ENCODE measurements at regions of chr6 and their contacts with region 1.

Region 1: DNA sequence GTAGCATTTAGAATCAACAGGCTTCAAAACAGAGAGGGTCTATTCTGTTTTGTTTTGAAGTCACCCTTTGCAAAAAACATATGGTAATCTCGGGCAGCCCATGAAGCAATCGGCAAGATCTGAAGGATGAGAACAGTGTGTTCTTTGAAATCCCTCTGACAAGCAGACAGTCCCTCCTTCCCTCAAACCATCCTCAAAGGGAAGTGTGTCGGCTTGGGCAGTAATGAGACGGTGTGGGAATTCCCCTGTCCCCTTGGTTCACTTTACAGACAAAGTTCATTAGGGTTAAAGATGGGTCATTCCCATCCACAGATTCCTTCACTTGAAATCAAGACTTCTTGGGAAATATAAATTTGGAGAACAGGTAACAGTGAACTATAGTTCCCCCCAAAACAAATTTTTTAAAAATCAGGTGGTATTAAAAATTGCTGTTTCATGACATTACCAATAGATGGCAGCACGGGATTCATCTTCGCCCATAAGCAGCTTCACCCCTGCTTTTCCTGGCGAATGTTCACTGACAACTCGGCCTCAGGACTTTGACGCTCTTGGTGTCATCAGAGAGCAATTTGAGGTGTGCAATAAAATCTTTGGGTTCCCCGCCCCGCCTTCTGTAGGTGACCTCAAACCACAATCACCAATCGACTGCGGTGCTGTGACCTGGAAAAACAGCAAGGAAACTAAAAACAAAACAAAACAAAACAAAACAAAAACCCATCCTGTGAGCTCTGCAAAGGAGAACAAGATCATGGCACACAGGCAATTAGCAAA is 159.3 kb upstream of the TNFAIP3 start:
- DNase-seq: peak in 1 of 2 donors; percentile 68
- ATAC-seq: peak; percentile 75
- H3K4me3 ChIP-seq: no peak overlapping the region
- H3K27ac ChIP-seq: no peak overlapping the region
- H3K4me1 ChIP-seq: no peaks in the 10 kb centered on the region
- H3K27me3 ChIP-seq: no peaks in the 10 kb centered on the region

Region 2: GRCh38 chr6:137866914-137867684 is 159.3 kb after region 1 on chr6 and contains the start of gene TNFAIP3:
- intact Hi-C with region 1: loop called (anchors 5 kb)
- DNase-seq: peak; percentile 95 to 98
- ATAC-seq: peak; percentile 94
- H3K4me3 ChIP-seq: peak within 1 kb of the TSS; percentile 75 to 78
- H3K27ac ChIP-seq: peak within 1 kb of the TSS; percentile 40 to 77
- H3K4me1 ChIP-seq: no peaks in the 10 kb centered on the region
- H3K27me3 ChIP-seq: no peaks in the 10 kb centered on the region
- total RNA-seq, gene TNFAIP3: 22.0 to 40.2 TPM

Region 3: GRCh38 chr6:137944793-137945498 is 237.2 kb after region 1 on chr6:
- intact Hi-C with region 1: loop called (anchors 2 kb)
- DNase-seq: no peak
- ATAC-seq: peak; percentile 69
- H3K4me3 ChIP-seq: no peak overlapping the region
- H3K27ac ChIP-seq: no peak overlapping the region
- H3K4me1 ChIP-seq: no peaks in the 10 kb centered on the region
- H3K27me3 ChIP-seq: no peaks in the 10 kb centered on the region

Region 4: GRCh38 chr6:137975188-137975940 is 267.6 kb after region 1 on chr6:
- intact Hi-C with region 1: loop called (anchors 10 kb)
- DNase-seq: no peak
- ATAC-seq: no peak
- H3K4me3 ChIP-seq: no peak overlapping the region
- H3K27ac ChIP-seq: no peak overlapping the region
- H3K4me1 ChIP-seq: no peaks in the 10 kb centered on the region
- H3K27me3 ChIP-seq: no peaks in the 10 kb centered on the region

Region 5: GRCh38 chr6:138031850-138032249 is 324.1 kb after region 1 on chr6:
- intact Hi-C with region 1: no loop called
- DNase-seq: no peak
- ATAC-seq: no peak
- H3K4me3 ChIP-seq: no peak overlapping the region
- H3K27ac ChIP-seq: no peak overlapping the region
- H3K4me1 ChIP-seq: no peaks in the 10 kb centered on the region
- H3K27me3 ChIP-seq: peaks cover 0 to 1% of the 10 kb centered on the region in 2 donors

Region 6: DNA sequence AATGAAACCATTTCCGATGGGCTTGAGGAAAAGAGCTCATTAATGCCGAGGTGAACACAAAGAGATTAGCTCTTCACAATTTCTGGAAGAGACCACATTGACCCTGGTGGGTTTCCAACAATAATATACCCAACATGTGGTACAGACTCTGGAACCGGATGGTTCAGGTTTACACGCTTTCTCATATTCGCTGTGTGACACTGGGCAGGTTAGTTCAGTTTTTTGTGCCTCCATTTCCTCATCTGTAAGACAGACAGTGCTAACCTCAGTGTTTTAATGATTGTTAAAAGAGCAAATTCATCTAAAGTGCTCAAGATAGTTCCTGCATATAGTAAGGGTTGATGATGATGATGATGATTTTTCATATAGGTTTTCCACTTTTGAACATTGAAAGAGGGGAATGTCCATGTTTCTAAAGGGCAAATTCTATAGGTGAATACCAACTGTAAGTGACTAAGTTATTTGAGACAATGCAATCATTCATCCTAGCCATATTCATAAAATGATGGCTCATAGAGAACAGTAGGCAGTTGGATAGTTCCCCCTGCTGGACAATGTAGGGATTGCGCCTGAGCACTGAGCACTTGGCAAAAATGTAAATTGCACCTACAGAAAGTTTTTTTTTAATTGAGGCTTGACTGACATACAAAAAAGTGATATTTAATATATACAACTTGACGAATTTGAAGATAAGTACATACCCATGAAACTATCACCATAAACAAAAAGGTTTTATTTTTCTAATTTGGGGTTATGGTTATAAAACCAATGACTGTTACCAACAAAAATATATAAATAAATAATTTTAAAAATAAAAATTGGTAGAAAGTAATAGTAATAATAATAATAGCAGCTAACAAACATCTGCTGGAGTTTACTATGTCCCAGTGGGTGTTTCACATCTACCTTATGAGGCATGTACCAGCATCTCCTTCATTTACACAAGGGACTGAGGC is 401.5 kb after region 1 on chr6:
- intact Hi-C with region 1: loop called in 1 of 2 experiments (anchors 5 kb)
- DNase-seq: peak; percentile 70 to 78
- ATAC-seq: peak; percentile 87
- H3K4me3 ChIP-seq: no peak overlapping the region
- H3K27ac ChIP-seq: no peak overlapping the region
- H3K4me1 ChIP-seq: no peaks in the 10 kb centered on the region
- H3K27me3 ChIP-seq: no peaks in the 10 kb centered on the region